Prostate gland (tissue), 2 donors: ENCODE measurements at regions of chr5 and their contacts with region 1.

Region 1: GRCh38 chr5:120055858-120056257 is 408.2 kb upstream of the PRR16 start:
- DNase-seq: peak; percentile 26
- H3K4me3 ChIP-seq: no peak overlapping the region
- H3K27ac ChIP-seq: no peak overlapping the region
- H3K4me1 ChIP-seq: peaks cover 7% of the 10 kb centered on the region
- H3K27me3 ChIP-seq: no peaks in the 10 kb centered on the region
- CTCF ChIP-seq: peak in 1 of 4 experiments; percentile 35
- POLR2A ChIP-seq: no peak

Region 2: GRCh38 chr5:120007598-120007997 is 48.3 kb before region 1 on chr5:
- intact Hi-C with region 1: loop called (anchors 5 kb)
- DNase-seq: peak; percentile 39
- H3K4me3 ChIP-seq: no peak overlapping the region
- H3K27ac ChIP-seq: peak overlapping the region; percentile 35 to 41
- H3K4me1 ChIP-seq: peaks cover 4% of the 10 kb centered on the region
- H3K27me3 ChIP-seq: no peaks in the 10 kb centered on the region
- CTCF ChIP-seq: peak in 1 of 4 experiments; percentile 5
- POLR2A ChIP-seq: no peak

Region 3: GRCh38 chr5:120037451-120037850 is 18.4 kb before region 1 on chr5:
- intact Hi-C with region 1: no loop called
- DNase-seq: no peak
- H3K4me3 ChIP-seq: no peak overlapping the region
- H3K27ac ChIP-seq: no peak overlapping the region
- H3K4me1 ChIP-seq: no peaks in the 10 kb centered on the region
- H3K27me3 ChIP-seq: no peaks in the 10 kb centered on the region
- CTCF ChIP-seq: no peak
- POLR2A ChIP-seq: no peak

Region 4: GRCh38 chr5:120463991-120464626 is 408.3 kb after region 1 on chr5 and contains the start of gene PRR16:
- intact Hi-C with region 1: loop called (anchors 10 kb)
- DNase-seq: peak; percentile 42
- H3K4me3 ChIP-seq: peak within 1 kb of the TSS; percentile 40 to 53
- H3K27ac ChIP-seq: peak within 1 kb of the TSS; percentile 22 to 75
- H3K4me1 ChIP-seq: no peaks in the 10 kb centered on the region
- H3K27me3 ChIP-seq: no peaks in the 10 kb centered on the region
- CTCF ChIP-seq: peak in 2 of 4 experiments; percentile 30 to 45
- POLR2A ChIP-seq: no peak
- total RNA-seq, gene PRR16: 3.5 to 13.4 TPM